ENCODE measurements at regions of chr7 and their contacts with region 1.

Region 1: GRCh38 chr7:37753398-37754050 is 70.0 kb downstream of the GPR141 start:
- DNase-seq: no peak
- ATAC-seq: no peak
- H3K4me3 Mint-ChIP-seq: no peak overlapping the region
- H3K27ac Mint-ChIP-seq: no peak overlapping the region
- H3K4me1 Mint-ChIP-seq: peaks cover 3% of the 10 kb centered on the region
- H3K27me3 Mint-ChIP-seq: no peaks in the 10 kb centered on the region
- CTCF ChIP-seq: no peak

Region 2: GRCh38 chr7:37359662-37360444 is 393.7 kb before region 1 on chr7:
- CTCF ChIA-PET with region 1: no interaction called
- POLR2A ChIA-PET with region 1: no interaction called
- DNase-seq: no peak
- ATAC-seq: no peak
- H3K4me3 Mint-ChIP-seq: no peak overlapping the region
- H3K27ac Mint-ChIP-seq: no peak overlapping the region
- H3K4me1 Mint-ChIP-seq: peaks cover 29% of the 10 kb centered on the region
- H3K27me3 Mint-ChIP-seq: no peaks in the 10 kb centered on the region
- CTCF ChIP-seq: no peak

Region 3: GRCh38 chr7:37694175-37694779 is 59.2 kb before region 1 on chr7:
- CTCF ChIA-PET with region 1: no interaction called
- POLR2A ChIA-PET with region 1: interaction called, 12 read pairs
- DNase-seq: no peak
- ATAC-seq: peak; percentile 71
- H3K4me3 Mint-ChIP-seq: no peak overlapping the region
- H3K27ac Mint-ChIP-seq: no peak overlapping the region
- H3K4me1 Mint-ChIP-seq: peaks cover 21% of the 10 kb centered on the region
- H3K27me3 Mint-ChIP-seq: no peaks in the 10 kb centered on the region
- CTCF ChIP-seq: no peak

Region 4: GRCh38 chr7:38040831-38041230 is 287.3 kb after region 1 on chr7:
- CTCF ChIA-PET with region 1: no interaction called
- POLR2A ChIA-PET with region 1: no interaction called
- DNase-seq: no peak
- ATAC-seq: no peak
- H3K4me3 Mint-ChIP-seq: no peak overlapping the region
- H3K27ac Mint-ChIP-seq: no peak overlapping the region
- H3K4me1 Mint-ChIP-seq: no peaks in the 10 kb centered on the region
- H3K27me3 Mint-ChIP-seq: no peaks in the 10 kb centered on the region
- CTCF ChIP-seq: no peak